Activated CD4-positive, alpha-beta memory T cell treated with anti-CD3 and anti-CD28 coated beads for 36 hours (primary cell): ENCODE measurements at regions of chr7 and their contacts with region 1.

Region 1: GRCh38 chr7:134986363-134987251 is at the start of gene AGBL3:
- DNase-seq: peak; percentile 95
- H3K4me3 Mint-ChIP-seq: peak within 1 kb of the TSS; percentile 95
- H3K27ac Mint-ChIP-seq: peak within 1 kb of the TSS; percentile 95
- H3K4me1 Mint-ChIP-seq: peaks cover 35% of the 10 kb centered on the region
- H3K27me3 Mint-ChIP-seq: no peaks in the 10 kb centered on the region
- total RNA-seq, gene AGBL3: 3.3 to 3.4 TPM

Region 2: DNA sequence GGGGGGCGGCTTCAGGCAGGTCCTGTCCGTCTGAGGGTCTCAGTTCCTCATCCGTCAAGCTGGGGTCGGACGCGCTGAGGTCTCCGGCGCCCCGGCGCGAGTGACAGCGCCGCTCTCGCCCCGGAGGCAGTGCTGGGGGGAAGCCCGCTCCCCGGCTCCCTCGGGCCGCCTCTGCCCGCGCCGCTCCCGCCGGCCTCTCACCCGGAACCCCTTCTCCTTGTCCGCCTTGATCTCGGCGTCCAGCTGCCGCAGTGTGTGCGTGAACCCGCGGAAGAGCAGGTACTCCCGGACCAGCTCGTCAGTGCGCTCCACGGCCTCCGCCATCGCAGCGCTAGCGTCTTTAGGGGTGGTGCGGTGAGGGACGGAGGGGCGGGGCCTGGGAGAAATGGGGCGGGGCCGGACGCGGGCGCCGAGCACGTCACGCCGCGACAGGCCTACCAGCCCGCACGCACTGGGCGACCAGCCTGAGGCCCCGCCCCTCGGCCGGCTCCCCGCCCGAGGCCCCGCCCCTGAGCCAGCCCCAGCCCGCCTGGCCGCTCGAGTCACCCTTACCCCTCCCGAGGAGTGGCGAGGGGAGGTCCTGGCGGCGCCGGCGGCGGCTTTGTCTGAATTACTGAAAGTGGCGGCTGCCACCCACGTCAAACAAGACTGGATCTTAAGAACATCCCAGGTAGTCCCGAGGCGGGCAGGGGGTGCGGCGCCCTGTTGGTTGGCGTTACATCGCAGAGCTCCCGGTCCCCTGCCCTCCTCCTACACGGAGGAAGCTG is 224.8 kb after region 1 on chr7 and contains the start of gene WDR91:
- CTCF ChIA-PET with region 1: interaction called, 6 read pairs
- POLR2A ChIA-PET with region 1: no interaction called
- intact Hi-C with region 1: loop called (anchors 1 kb)
- DNase-seq: peak; percentile 98
- H3K4me3 Mint-ChIP-seq: peak within 1 kb of the TSS; percentile 93
- H3K27ac Mint-ChIP-seq: peak within 1 kb of the TSS; percentile 83
- H3K4me1 Mint-ChIP-seq: peaks cover 23% of the 10 kb centered on the region
- H3K27me3 Mint-ChIP-seq: no peaks in the 10 kb centered on the region
- total RNA-seq, gene WDR91: 10.3 to 11.0 TPM

Region 3: DNA sequence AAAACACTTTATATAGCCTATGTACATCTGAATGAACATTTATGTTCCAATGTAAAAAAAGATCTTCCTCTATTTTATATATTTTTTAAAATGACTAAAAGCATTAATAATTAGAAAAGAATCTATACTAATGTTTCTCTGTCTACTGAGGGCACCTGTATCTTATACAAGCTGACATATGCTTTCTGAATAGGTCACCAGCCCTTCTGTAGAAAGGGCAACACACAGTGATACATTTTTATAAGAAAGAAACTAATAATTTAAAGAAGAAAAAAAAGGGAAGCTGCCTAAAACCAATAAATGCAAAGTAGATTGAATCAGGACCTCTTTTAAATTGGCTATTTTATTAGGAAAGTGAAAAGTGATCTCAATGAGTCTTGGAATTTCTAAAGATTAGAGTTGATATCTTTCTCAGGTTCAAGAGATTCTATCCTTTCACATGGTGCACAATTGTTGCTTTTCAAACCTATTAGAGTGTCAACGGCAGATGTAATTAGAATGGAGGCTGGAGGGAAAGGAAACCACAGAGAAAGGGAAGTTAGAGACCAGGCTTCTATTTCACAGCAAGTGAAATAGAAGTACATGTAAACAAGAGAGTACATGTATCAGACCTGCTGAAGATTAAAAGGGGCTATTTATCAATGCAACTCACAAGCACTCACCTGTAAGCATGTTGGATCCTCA is 984.2 kb after region 1 on chr7:
- CTCF ChIA-PET with region 1: no interaction called
- POLR2A ChIA-PET with region 1: no interaction called
- intact Hi-C with region 1: loop called (anchors 5 kb)
- DNase-seq: no peak
- H3K4me3 Mint-ChIP-seq: no peak overlapping the region
- H3K27ac Mint-ChIP-seq: no peak overlapping the region
- H3K4me1 Mint-ChIP-seq: peaks cover 70% of the 10 kb centered on the region
- H3K27me3 Mint-ChIP-seq: no peaks in the 10 kb centered on the region